ENCODE measurements at regions of chr17 and their contacts with region 1.

Region 1: GRCh38 chr17:64635647-64636307 is 26.3 kb downstream of the SMURF2 start:
- DNase-seq: no peak
- H3K4me3 Mint-ChIP-seq: no peak overlapping the region
- H3K27ac Mint-ChIP-seq: peak overlapping the region; percentile 98
- H3K4me1 Mint-ChIP-seq: peaks cover 21% of the 10 kb centered on the region
- H3K27me3 Mint-ChIP-seq: peaks cover 2% of the 10 kb centered on the region

Region 2: DNA sequence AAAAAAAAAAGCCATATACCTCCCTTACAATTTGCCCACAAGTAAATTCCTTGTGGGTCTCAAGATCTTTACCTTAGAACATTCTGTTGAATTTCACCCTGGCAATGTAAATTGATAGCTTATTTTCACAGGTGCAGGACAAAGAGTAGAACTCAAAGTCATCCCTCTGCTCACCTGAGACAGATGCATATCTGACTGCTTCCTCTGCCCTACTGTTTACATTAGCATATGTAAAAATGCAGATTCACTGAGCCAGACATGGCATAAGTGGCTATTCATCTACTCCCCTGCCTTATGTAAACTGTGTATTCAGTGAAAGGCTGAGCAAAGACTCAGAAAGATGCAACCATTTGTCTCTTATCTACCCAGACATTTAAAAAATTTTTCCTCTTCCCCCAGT is 209.2 kb before region 1 on chr17:
- intact Hi-C with region 1: no loop called
- DNase-seq: no peak
- H3K4me3 Mint-ChIP-seq: no peak overlapping the region
- H3K27ac Mint-ChIP-seq: no peak overlapping the region
- H3K4me1 Mint-ChIP-seq: no peaks in the 10 kb centered on the region
- H3K27me3 Mint-ChIP-seq: peaks cover 16% of the 10 kb centered on the region

Region 3: GRCh38 chr17:64572638-64573154 is 63.1 kb before region 1 on chr17:
- intact Hi-C with region 1: loop called (anchors 1 kb)
- DNase-seq: peak; percentile 3
- H3K4me3 Mint-ChIP-seq: peak overlapping the region; percentile 40
- H3K27ac Mint-ChIP-seq: peak overlapping the region; percentile 82
- H3K4me1 Mint-ChIP-seq: peaks cover 17% of the 10 kb centered on the region
- H3K27me3 Mint-ChIP-seq: no peaks in the 10 kb centered on the region

Region 4: GRCh38 chr17:64580384-64581315 is 55.1 kb before region 1 on chr17:
- intact Hi-C with region 1: loop called (anchors 2 kb)
- DNase-seq: no peak
- H3K4me3 Mint-ChIP-seq: no peak overlapping the region
- H3K27ac Mint-ChIP-seq: peak overlapping the region; percentile 94
- H3K4me1 Mint-ChIP-seq: peaks cover 13% of the 10 kb centered on the region
- H3K27me3 Mint-ChIP-seq: no peaks in the 10 kb centered on the region

Region 5: GRCh38 chr17:64608540-64608981 is 27.2 kb before region 1 on chr17:
- intact Hi-C with region 1: loop called (anchors 1 kb)
- DNase-seq: no peak
- H3K4me3 Mint-ChIP-seq: no peak overlapping the region
- H3K27ac Mint-ChIP-seq: peak overlapping the region; percentile 70
- H3K4me1 Mint-ChIP-seq: peaks cover 21% of the 10 kb centered on the region
- H3K27me3 Mint-ChIP-seq: no peaks in the 10 kb centered on the region

Region 6: DNA sequence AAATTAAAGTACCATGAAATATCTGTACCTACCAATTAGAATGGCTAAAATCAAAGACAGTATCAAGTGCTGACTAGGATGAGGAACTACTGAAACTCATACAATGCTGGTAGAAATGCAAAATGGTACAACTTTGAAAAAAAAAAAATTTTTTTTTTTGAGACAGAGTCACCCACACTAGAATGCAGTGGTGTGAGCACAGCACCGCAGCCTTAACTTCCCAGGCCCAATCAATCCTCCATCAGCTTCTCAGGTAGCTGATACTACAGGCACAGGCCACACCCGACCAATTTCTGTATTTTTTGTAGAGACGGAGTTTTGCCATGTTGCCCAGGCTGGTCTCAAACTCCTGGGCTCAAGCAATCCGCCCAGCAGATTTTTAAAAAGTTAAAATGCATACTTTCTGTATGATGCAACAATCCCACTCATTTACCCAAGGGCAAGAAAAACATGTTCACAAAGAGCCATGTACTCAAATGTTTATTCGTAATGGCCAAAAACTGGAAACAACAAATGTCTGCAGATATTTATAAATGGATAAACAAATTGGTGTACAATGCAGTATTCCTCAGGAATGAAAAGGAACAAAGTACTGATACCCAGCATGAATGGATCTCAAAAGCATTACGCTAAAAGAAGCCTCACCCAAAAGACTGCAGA is 17.7 kb after region 1 on chr17:
- intact Hi-C with region 1: loop called (anchors 1 kb)
- DNase-seq: no peak
- H3K4me3 Mint-ChIP-seq: no peak overlapping the region
- H3K27ac Mint-ChIP-seq: no peak overlapping the region
- H3K4me1 Mint-ChIP-seq: peaks cover 32% of the 10 kb centered on the region
- H3K27me3 Mint-ChIP-seq: no peaks in the 10 kb centered on the region

Region 7: GRCh38 chr17:64920026-64920418 is 284.2 kb after region 1 on chr17:
- intact Hi-C with region 1: loop called (anchors 10 kb)
- DNase-seq: no peak
- H3K4me3 Mint-ChIP-seq: peak overlapping the region; percentile 89
- H3K27ac Mint-ChIP-seq: peak overlapping the region; percentile 87
- H3K4me1 Mint-ChIP-seq: peaks cover 21% of the 10 kb centered on the region
- H3K27me3 Mint-ChIP-seq: peaks cover 2% of the 10 kb centered on the region